PC-9 (cell line): ENCODE measurements at regions of chr1 and their contacts with region 1.

Region 1: GRCh38 chr1:241592273-241592958 is 47.8 kb downstream of the CHML start:
- DNase-seq: peak in 1 of 2 experiments; percentile 87
- H3K4me3 ChIP-seq: no peak overlapping the region; the same call in 1 of the 2 replicates
- H3K27ac ChIP-seq: peak overlapping the region; percentile 78
- H3K4me1 ChIP-seq: peaks cover 36% of the 10 kb centered on the region
- H3K27me3 ChIP-seq: no peaks in the 10 kb centered on the region
- CTCF ChIP-seq: no peak

Region 2: DNA sequence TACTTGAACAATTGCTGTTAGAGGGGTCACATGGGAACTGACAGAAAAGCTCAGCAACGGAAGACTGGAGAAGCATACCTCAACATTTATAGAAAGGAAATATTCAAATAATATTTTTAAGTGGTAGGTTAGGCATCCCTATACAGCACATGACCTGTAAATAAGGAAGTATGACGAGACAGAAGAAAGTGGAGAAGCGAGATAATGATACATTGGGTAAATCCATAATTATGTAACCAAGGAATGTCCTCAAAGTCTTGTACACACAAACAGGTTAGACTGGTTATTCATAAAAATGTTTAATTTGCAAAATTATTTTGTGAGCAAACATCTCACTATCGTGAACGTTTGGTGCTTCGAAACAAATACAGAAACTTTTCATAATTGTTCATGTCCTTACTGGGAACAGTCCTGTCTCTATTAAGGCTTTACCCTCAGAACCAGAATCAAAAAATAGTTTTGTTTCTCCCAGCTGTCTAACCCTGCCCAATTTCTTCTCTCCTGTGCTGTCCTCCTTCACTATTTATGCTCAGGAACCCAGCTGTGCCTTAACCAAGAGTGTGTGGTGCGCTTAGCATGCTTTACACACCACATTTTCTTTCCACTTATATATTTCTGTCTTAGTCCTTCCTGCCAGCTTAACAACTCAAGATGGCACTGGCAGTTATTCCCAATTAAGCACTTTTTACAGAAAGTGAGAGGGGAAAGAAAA is 50.1 kb before region 1 on chr1:
- CTCF ChIA-PET with region 1: no interaction called
- POLR2A ChIA-PET with region 1: no interaction called
- intact Hi-C with region 1: loop called (anchors 2 kb)
- DNase-seq: peak in 1 of 2 experiments; percentile 92
- H3K4me3 ChIP-seq: peak overlapping the region; percentile 43; the same call in 1 of the 2 replicates
- H3K27ac ChIP-seq: peak overlapping the region; percentile 72
- H3K4me1 ChIP-seq: peaks cover 20% of the 10 kb centered on the region
- H3K27me3 ChIP-seq: no peaks in the 10 kb centered on the region
- CTCF ChIP-seq: no peak

Region 3: DNA sequence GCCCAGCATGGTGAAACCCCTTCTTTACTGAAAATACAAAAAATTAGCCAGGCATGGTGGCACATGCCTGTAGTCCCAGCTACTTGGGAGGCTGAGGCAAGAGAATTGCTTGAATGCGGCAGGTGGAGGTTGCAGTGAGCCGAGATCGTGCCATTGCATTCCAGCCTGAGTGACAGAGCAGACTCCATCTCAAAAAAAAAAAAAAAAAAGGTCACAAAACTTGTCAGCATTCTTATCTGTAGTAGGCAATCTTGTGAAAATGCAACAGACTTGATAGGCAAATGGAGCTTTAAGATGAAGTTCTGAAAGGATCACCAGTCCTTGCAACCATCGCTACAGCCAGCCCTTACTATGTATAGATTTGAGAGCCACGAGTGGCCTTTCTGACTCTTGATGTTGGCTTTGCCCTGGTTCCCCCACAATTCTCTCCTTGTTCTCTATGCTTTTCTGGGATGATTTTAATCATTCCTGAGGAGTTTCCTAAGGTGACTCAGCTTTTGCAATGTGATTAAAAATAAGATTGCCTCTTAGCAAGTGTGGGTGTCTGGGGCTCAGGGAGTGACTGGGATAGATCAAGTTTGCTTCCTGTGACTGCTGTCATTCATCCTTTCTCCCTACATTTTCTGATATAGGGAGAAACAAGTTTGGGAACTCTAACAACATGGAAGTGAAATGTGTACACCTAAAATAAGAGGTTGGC is 413.6 kb after region 1 on chr1:
- CTCF ChIA-PET with region 1: no interaction called
- POLR2A ChIA-PET with region 1: no interaction called
- intact Hi-C with region 1: loop called (anchors 5 kb)
- DNase-seq: peak in 1 of 2 experiments; percentile 43
- H3K4me3 ChIP-seq: no peak overlapping the region
- H3K27ac ChIP-seq: no peak overlapping the region
- H3K4me1 ChIP-seq: peaks cover 8% of the 10 kb centered on the region; the same call in 1 of the 2 replicates
- H3K27me3 ChIP-seq: no peaks in the 10 kb centered on the region
- CTCF ChIP-seq: no peak